ENCODE measurements at regions of chr5 and their contacts with region 1.

Region 1: DNA sequence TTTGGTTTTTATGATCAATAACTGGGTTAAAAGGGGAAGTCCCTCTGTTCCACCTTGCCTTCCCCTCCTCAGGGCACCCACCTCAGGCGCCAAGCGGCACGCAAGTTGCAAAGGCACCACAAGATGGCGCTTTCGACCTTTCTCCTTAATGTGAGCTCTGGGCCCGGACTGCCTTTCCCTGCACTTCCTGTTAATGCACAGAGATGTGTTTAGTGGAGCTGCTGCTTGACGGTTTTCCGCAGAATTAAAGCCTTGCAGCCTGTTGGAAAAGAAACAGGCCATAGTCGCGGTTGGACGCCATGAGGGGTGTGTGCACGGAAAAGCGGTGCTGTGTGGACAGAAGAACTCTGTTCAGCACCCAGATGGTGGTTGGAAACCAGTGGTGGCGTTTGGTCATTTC is 17.9 kb downstream of the CXCL14 start:
- DNase-seq: peak; percentile 60 to 97 (median 86)

Region 2: GRCh38 chr5:134411546-134412266 is 1149.2 kb before region 1 on chr5 and contains the start of gene CDKN2AIPNL:
- intact Hi-C with region 1: no loop called
- DNase-seq: peak; percentile 90 to 99 (median 96)

Region 3: GRCh38 chr5:135591277-135591676 is 30.4 kb after region 1 on chr5:
- intact Hi-C with region 1: no loop called
- DNase-seq: peak in 8 of 10 donors; percentile 20 to 91 (median 55)

Region 4: DNA sequence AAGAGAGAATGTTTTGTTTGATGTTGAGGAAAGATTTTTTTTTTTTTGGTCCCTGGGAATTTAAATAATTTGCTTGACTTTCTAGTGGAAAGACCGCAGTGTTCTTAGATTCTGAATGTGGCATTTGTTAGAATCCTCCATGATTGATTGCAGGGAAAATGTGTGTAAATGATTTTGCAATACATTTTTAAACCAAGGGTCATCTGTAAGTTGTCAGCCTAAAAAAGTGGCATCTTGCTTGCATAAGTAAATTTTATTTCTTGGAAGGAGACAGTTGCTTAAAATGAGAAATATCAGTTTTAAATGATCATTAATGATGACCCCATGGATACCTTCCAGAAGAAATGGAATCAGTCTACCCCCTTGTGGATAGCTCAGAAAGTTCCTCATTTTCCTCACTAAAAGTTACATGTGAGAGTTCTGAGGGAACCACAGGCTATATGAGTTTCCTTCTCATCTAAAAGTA is 168.5 kb after region 1 on chr5:
- intact Hi-C with region 1: loop called (anchors 5 kb)
- DNase-seq: no peak